Caco-2 (cell line): ENCODE measurements at regions of chr13 and their contacts with region 1.

Region 1: DNA sequence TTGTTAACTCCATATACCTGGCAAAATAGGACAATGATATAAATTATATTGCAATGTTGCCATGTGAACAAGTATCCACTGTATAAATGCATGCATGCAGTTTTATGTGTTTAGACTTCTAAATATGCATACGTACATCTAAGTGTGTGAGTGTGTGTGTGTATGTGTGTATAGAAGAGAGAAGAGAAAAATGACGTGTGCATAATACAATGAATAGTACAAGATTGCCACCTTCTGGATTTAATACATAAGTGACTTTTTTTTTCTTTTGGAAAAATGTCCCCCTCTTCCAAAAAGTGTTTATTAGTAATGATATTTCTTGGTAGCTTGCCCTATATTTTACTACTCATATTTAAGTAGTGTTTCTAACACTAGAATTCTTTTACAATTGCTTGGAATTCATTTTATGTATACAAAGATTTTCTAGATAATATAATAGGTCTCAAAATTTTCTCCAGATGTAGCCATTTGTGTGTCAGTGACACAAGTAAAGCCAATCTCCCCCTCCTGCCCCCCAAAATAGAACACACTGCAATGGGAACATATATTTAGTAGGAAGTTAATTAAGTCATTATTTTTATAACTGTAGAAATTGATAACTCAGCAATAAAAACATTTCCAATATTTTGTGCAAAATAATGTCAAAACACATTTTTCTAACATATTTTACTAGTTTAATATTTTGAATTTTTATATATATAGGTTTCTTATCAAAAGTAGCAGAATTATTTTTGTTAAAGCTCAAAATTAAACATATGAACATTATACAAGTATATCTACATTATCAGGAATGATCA is 783.3 kb upstream of the ATXN8OS start:
- DNase-seq: no peak
- H3K4me3 ChIP-seq: no peak overlapping the region
- H3K4me3 Mint-ChIP-seq: no peak overlapping the region
- H3K27ac Mint-ChIP-seq: no peak overlapping the region
- H3K4me1 ChIP-seq: no peaks in the 10 kb centered on the region
- H3K4me1 Mint-ChIP-seq: peaks cover 7% of the 10 kb centered on the region
- H3K27me3 ChIP-seq: no peaks in the 10 kb centered on the region
- H3K27me3 Mint-ChIP-seq: no peaks in the 10 kb centered on the region
- CTCF ChIP-seq: peak; percentile 8 to 42

Region 2: DNA sequence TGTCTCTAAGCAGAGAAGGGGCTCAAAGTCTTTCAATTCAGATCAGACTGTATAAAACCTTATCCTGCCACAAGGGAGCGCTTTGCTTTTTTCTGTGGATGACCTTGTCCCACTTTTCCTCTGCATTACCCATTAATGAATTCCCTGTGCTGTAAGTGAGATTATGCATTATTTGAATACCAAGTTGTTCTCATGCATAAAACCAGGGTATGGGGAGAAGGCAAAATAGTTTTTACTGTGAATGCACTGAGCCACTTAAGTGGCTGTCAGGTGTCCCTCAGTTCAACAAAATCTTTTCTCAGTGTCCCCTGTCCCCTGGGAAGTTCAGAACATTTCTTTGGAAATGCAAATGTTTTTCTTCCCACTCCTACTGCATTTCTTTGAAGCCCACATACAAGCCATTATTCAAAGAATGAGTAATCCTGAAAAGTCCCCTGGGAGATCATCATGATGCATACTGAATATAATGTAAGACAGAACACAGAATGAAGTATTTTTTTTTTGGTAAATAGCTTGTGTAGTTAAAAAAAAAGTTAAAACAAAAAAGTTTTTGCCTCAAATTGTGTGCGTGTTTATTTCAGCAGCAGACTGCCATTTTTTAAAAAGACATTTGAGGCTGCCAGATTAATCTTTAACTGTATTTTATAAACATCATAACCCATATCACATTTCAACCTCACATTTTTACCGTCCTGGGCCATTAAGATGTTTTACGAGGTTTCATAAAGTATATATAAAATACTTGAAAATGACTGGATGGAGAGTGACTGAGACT is 1587.5 kb before region 1 on chr13:
- CTCF ChIA-PET with region 1: no interaction called
- POLR2A ChIA-PET with region 1: no interaction called
- intact Hi-C with region 1: loop called (anchors 5 kb)
- DNase-seq: peak in 1 of 2 experiments; percentile 38
- H3K4me3 ChIP-seq: no peak overlapping the region
- H3K4me3 Mint-ChIP-seq: no peak overlapping the region
- H3K27ac Mint-ChIP-seq: no peak overlapping the region
- H3K4me1 ChIP-seq: no peaks in the 10 kb centered on the region
- H3K4me1 Mint-ChIP-seq: no peaks in the 10 kb centered on the region
- H3K27me3 ChIP-seq: no peaks in the 10 kb centered on the region
- H3K27me3 Mint-ChIP-seq: peaks cover 6% of the 10 kb centered on the region
- CTCF ChIP-seq: peak; percentile 29 to 33

Region 3: DNA sequence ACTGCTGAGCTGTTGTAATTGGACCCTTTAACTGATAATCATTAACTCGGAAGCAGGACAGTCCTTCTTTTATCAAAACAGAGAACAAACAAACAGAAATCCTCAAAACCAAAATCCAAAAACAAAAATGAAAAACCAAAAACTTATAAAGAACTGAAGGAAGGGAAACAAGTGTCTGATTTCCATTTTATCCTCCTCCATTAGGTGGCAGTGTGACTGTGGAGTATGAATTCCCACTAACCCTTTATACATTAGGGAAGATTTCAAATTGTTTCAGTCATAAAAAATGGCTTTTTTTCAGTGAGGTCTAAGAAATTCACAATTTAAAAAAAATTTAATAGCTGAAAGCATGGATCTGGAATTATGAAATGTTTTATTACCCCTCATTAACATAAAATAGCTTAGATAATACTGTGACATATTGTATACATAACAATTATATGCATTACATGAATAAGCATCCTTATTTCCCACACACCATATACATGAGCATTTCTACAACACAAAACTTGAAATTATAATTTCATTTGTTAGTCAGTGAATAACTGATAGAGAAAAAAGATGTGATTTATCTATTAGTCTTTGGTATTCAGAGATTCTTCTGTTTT is 1019.9 kb before region 1 on chr13:
- CTCF ChIA-PET with region 1: no interaction called
- POLR2A ChIA-PET with region 1: no interaction called
- intact Hi-C with region 1: loop called (anchors 2 kb)
- DNase-seq: peak in 1 of 2 experiments; percentile 38
- H3K4me3 ChIP-seq: no peak overlapping the region
- H3K4me3 Mint-ChIP-seq: no peak overlapping the region
- H3K27ac Mint-ChIP-seq: no peak overlapping the region
- H3K4me1 ChIP-seq: no peaks in the 10 kb centered on the region
- H3K4me1 Mint-ChIP-seq: no peaks in the 10 kb centered on the region
- H3K27me3 ChIP-seq: no peaks in the 10 kb centered on the region
- H3K27me3 Mint-ChIP-seq: peaks cover 4% of the 10 kb centered on the region
- CTCF ChIP-seq: peak; percentile 67 to 69

Region 4: GRCh38 chr13:68810660-68811059 is 513.6 kb before region 1 on chr13:
- CTCF ChIA-PET with region 1: no interaction called
- POLR2A ChIA-PET with region 1: no interaction called
- intact Hi-C with region 1: loop called (anchors 1 kb)
- DNase-seq: peak in 1 of 2 experiments; percentile 16
- H3K4me3 ChIP-seq: no peak overlapping the region
- H3K4me3 Mint-ChIP-seq: no peak overlapping the region
- H3K27ac Mint-ChIP-seq: no peak overlapping the region
- H3K4me1 ChIP-seq: no peaks in the 10 kb centered on the region
- H3K4me1 Mint-ChIP-seq: no peaks in the 10 kb centered on the region
- H3K27me3 ChIP-seq: no peaks in the 10 kb centered on the region
- H3K27me3 Mint-ChIP-seq: no peaks in the 10 kb centered on the region
- CTCF ChIP-seq: peak; percentile 23 to 61

Region 5: DNA sequence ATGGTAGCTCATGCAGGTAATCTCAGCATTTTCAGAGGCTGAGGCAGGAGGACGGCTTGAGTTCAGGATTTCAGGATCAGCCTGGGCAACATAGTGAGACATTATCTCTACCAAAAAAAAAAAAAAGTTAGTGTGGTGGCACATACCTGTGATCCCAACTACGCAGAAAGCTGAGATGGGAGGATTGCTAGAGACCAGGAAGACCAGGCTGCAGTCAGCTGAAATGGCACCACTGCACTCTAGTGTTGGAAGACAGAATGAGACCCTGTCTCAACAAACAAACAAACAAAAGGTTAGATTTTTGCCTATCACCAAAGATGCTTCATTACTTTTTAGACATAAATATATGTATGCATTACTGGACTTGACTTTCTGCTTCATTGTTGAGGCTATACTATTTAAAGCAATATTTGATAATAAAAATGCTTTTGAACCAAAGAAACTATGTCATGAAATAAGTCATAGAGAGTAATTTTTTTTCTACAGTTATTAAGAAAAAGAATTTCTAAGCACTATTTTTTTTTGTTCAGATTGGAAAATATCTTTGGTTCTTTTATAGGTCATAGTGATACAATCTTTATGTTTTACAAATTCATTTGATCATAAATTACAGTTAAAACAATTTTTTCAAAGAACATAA is 396.8 kb before region 1 on chr13:
- CTCF ChIA-PET with region 1: no interaction called
- POLR2A ChIA-PET with region 1: no interaction called
- intact Hi-C with region 1: loop called (anchors 5 kb)
- DNase-seq: peak; percentile 57
- H3K4me3 ChIP-seq: no peak overlapping the region
- H3K4me3 Mint-ChIP-seq: no peak overlapping the region
- H3K27ac Mint-ChIP-seq: no peak overlapping the region
- H3K4me1 ChIP-seq: no peaks in the 10 kb centered on the region
- H3K4me1 Mint-ChIP-seq: no peaks in the 10 kb centered on the region
- H3K27me3 ChIP-seq: no peaks in the 10 kb centered on the region
- H3K27me3 Mint-ChIP-seq: no peaks in the 10 kb centered on the region
- CTCF ChIP-seq: peak; percentile 78

Region 6: GRCh38 chr13:69028936-69029335 is 295.4 kb before region 1 on chr13:
- CTCF ChIA-PET with region 1: no interaction called
- POLR2A ChIA-PET with region 1: no interaction called
- intact Hi-C with region 1: no loop called
- DNase-seq: no peak
- H3K4me3 ChIP-seq: no peak overlapping the region
- H3K4me3 Mint-ChIP-seq: no peak overlapping the region
- H3K27ac Mint-ChIP-seq: no peak overlapping the region
- H3K4me1 ChIP-seq: no peaks in the 10 kb centered on the region
- H3K4me1 Mint-ChIP-seq: no peaks in the 10 kb centered on the region
- H3K27me3 ChIP-seq: no peaks in the 10 kb centered on the region
- H3K27me3 Mint-ChIP-seq: no peaks in the 10 kb centered on the region
- CTCF ChIP-seq: no peak

Region 7: GRCh38 chr13:69092615-69093322 is 231.5 kb before region 1 on chr13:
- CTCF ChIA-PET with region 1: no interaction called
- POLR2A ChIA-PET with region 1: no interaction called
- intact Hi-C with region 1: loop called (anchors 10 kb)
- DNase-seq: no peak
- H3K4me3 ChIP-seq: no peak overlapping the region
- H3K4me3 Mint-ChIP-seq: no peak overlapping the region
- H3K27ac Mint-ChIP-seq: no peak overlapping the region
- H3K4me1 ChIP-seq: no peaks in the 10 kb centered on the region
- H3K4me1 Mint-ChIP-seq: no peaks in the 10 kb centered on the region
- H3K27me3 ChIP-seq: no peaks in the 10 kb centered on the region
- H3K27me3 Mint-ChIP-seq: no peaks in the 10 kb centered on the region
- CTCF ChIP-seq: peak in 1 of 2 experiments; percentile 12